Heart left ventricle (tissue), 16 donors: ENCODE measurements at regions of chr11 and their contacts with region 1.

Region 1: DNA sequence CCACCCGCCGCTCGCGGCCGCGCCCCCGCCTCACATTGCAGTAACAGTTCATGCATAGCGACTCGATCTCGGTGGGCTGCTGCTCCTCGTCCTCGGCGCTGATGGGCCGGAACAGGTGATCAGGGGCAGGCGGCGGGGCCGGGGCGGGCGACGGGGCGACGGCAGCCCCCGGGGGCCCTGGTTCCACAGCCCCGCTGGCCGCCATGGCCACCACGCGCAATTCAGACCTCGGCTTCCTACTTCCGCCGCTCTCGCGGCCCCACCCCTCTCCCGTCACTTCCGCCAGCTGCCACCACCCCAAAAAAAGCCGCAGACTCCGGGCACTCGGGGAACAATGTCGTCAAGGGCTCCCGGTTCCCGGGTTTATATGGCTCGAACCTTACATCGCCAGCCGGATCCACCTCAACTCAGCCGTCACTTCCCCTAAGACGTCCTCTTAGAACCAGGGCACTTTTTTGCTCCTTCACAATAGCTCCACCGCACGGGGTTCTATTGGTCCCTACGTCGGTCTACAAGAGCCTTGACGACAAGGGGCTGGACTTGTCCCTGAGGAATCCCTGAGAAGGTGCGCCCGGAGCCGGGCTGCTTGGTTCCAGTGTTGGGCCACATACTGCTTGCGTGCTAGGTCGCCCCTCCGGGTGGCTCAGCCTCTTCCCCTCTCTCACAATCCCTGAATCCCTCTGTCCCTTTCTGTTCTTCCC is at the start of gene ZPR1:
- DNase-seq: peak; percentile 85 to 92 (median 88)
- ATAC-seq: peak; percentile 80 to 90 (median 88)
- H3K4me3 ChIP-seq: peak within 1 kb of the TSS; percentile 74 to 99 (median 96)
- H3K27ac ChIP-seq: peak within 1 kb of the TSS; percentile 61 to 93 (median 84)
- H3K4me1 ChIP-seq: peaks cover 0 to 31% (median 16%) of the 10 kb centered on the region in 12 donors
- H3K27me3 ChIP-seq: no peaks in the 10 kb centered on the region
- CTCF ChIP-seq: no peak
- POLR2A ChIP-seq: peak in 1 of 2 donors; percentile 66
- total RNA-seq, gene ZPR1: 9.7 to 48.7 (median 27.1) TPM

Region 2: GRCh38 chr11:116715383-116715782 is 72.6 kb before region 1 on chr11:
- intact Hi-C with region 1: no loop called
- DNase-seq: no peak
- ATAC-seq: no peak
- H3K4me3 ChIP-seq: no peak overlapping the region
- H3K27ac ChIP-seq: no peak overlapping the region
- H3K4me1 ChIP-seq: no peaks in the 10 kb centered on the region
- H3K27me3 ChIP-seq: peaks cover 0 to 24% (median 3%) of the 10 kb centered on the region in 9 donors
- CTCF ChIP-seq: no peak
- POLR2A ChIP-seq: no peak

Region 3: DNA sequence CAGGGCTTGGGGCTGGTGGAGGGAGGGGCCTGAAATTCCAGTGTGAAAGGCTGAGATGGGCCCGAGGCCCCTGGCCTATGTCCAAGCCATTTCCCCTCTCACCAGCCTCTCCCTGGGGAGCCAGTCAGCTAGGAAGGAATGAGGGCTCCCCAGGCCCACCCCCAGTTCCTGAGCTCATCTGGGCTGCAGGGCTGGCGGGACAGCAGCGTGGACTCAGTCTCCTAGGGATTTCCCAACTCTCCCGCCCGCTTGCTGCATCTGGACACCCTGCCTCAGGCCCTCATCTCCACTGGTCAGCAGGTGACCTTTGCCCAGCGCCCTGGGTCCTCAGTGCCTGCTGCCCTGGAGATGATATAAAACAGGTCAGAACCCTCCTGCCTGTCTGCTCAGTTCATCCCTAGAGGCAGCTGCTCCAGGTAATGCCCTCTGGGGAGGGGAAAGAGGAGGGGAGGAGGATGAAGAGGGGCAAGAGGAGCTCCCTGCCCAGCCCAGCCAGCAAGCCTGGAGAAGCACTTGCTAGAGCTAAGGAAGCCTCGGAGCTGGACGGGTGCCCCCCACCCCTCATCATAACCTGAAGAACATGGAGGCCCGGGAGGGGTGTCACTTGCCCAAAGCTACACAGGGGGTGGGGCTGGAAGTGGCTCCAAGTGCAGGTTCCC is 41.7 kb after region 1 on chr11 and contains the start of gene APOC3:
- intact Hi-C with region 1: loop called in 3 of 10 experiments (anchors 2 to 5 kb)
- DNase-seq: no peak
- ATAC-seq: no peak
- H3K4me3 ChIP-seq: no peak within 1 kb of the TSS
- H3K27ac ChIP-seq: no peak within 1 kb of the TSS
- H3K4me1 ChIP-seq: peaks cover 0 to 6% (median under 1%) of the 10 kb centered on the region in 12 donors
- H3K27me3 ChIP-seq: no peaks in the 10 kb centered on the region
- CTCF ChIP-seq: no peak
- POLR2A ChIP-seq: no peak
- total RNA-seq, gene APOC3: 0.39 to 9.9 TPM in 2 of 9 donors, not detected in the others

Region 4: GRCh38 chr11:116835791-116836631 is 48.1 kb after region 1 on chr11:
- intact Hi-C with region 1: loop called (anchors 1 to 5 kb)
- DNase-seq: peak; percentile 85 to 94 (median 92)
- ATAC-seq: peak; percentile 79 to 85 (median 84)
- H3K4me3 ChIP-seq: peak overlapping the region in 11 of 12 donors; percentile 19 to 60 (median 46)
- H3K27ac ChIP-seq: peak overlapping the region; percentile 69 to 90 (median 82)
- H3K4me1 ChIP-seq: peaks cover 0 to 62% (median 29%) of the 10 kb centered on the region in 12 donors
- H3K27me3 ChIP-seq: no peaks in the 10 kb centered on the region
- CTCF ChIP-seq: peak; percentile 28 to 78 (median 53)
- POLR2A ChIP-seq: no peak

Region 5: DNA sequence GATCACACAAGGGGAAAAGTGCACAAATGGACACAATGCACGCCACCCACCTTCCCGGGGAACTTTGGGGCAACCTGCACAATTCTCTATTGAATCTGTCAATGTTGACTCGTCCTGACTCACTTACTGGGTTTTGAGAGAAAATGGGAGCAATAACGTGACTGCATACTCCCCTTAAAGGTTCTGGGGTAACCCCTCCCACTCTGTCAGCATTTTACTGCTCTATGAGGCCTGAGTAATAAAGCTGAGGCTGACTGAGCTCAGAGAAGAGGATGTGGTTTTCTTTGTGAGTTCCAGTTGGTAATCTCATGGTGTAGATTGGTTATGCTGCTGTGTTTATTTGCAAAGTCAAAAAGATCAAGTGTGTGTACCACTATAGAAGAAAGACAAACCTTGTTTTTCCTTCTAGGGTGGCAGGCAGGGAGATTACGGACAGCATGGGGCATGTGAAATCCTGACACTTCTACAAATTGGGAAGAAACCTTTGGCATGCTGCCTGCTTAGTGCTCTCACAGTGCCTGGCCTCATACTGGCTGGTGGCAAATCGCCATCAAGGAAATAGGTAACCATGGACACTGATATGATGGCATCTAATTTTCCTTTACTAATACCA is 65.6 kb after region 1 on chr11:
- intact Hi-C with region 1: no loop called
- DNase-seq: no peak
- ATAC-seq: peak in 3 of 4 donors; percentile 33 to 64 (median 46)
- H3K4me3 ChIP-seq: peak overlapping the region in 1 of 12 donors; percentile 9
- H3K27ac ChIP-seq: peak overlapping the region in 1 of 12 donors; percentile 87
- H3K4me1 ChIP-seq: peaks cover 0 to 58% (median 18%) of the 10 kb centered on the region in 12 donors
- H3K27me3 ChIP-seq: no peaks in the 10 kb centered on the region
- CTCF ChIP-seq: no peak
- POLR2A ChIP-seq: no peak

Region 6: GRCh38 chr11:116879800-116880625 is 92.1 kb after region 1 on chr11:
- intact Hi-C with region 1: loop called in 3 of 10 experiments (anchors 5 to 10 kb)
- DNase-seq: no peak
- ATAC-seq: peak; percentile 67 to 90 (median 85)
- H3K4me3 ChIP-seq: no peak overlapping the region
- H3K27ac ChIP-seq: no peak overlapping the region
- H3K4me1 ChIP-seq: peaks cover 0 to 32% (median 2%) of the 10 kb centered on the region in 12 donors
- H3K27me3 ChIP-seq: no peaks in the 10 kb centered on the region
- CTCF ChIP-seq: peak; percentile 52 to 81 (median 66)
- POLR2A ChIP-seq: no peak

Region 7: DNA sequence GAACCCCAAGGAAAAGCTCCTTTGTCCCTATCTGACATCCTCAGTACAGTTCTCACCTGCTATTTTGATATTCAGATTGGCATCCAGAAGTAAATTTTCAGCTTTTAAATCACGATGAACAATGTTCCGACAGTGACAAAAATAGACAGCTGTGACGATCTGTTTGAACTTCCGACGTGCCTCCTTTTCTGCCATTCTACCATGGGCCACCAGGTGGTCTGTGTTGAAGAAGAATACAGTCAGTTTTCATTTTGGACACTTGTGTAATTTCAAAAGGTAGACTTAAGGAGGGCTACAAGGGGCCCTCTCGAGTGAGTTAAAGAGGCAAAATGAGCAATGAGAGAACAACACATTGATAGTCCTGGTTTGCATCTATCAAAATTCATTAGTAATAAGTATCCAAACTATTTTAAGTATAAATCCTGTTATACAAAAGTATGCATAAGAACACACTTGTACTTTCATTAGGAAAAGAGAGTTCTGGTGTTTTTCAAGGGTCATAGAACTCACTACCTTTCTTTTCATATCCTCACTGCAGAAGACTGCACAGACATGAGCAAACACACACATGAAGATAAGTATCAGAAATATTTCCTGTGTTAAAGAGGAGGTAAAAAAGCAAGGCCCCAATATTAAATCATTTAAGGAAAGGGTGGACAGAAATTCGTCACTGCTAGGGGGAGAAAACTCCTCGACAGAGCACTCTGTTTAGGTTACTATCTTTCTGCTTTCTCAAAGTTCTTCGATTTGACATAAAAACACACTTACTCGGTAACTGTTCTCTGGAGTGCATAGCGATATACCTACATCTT is 139.4 kb after region 1 on chr11:
- intact Hi-C with region 1: no loop called
- DNase-seq: no peak
- ATAC-seq: no peak
- H3K4me3 ChIP-seq: no peak overlapping the region
- H3K27ac ChIP-seq: peak overlapping the region in 1 of 12 donors; percentile 82
- H3K4me1 ChIP-seq: peaks cover 12 to 82% (median 48%) of the 10 kb centered on the region in 12 donors
- H3K27me3 ChIP-seq: no peaks in the 10 kb centered on the region
- CTCF ChIP-seq: peak in 11 of 12 donors; percentile 11 to 43 (median 27)
- POLR2A ChIP-seq: no peak